Gastrocnemius medialis (tissue), 4 donors: ENCODE measurements at regions of chr11 and their contacts with region 1.

Region 1: GRCh38 chr11:14454861-14455632 is 44.6 kb downstream of the COPB1 start:
- DNase-seq: no peak
- ATAC-seq: peak; percentile 69 to 80
- H3K4me3 ChIP-seq: no peak overlapping the region
- H3K27ac ChIP-seq: no peak overlapping the region
- H3K4me1 ChIP-seq: no peaks in the 10 kb centered on the region
- H3K27me3 ChIP-seq: no peaks in the 10 kb centered on the region
- CTCF ChIP-seq: peak in 4 of 5 experiments; percentile 23 to 62 (median 49)
- POLR2A ChIP-seq: no peak

Region 2: DNA sequence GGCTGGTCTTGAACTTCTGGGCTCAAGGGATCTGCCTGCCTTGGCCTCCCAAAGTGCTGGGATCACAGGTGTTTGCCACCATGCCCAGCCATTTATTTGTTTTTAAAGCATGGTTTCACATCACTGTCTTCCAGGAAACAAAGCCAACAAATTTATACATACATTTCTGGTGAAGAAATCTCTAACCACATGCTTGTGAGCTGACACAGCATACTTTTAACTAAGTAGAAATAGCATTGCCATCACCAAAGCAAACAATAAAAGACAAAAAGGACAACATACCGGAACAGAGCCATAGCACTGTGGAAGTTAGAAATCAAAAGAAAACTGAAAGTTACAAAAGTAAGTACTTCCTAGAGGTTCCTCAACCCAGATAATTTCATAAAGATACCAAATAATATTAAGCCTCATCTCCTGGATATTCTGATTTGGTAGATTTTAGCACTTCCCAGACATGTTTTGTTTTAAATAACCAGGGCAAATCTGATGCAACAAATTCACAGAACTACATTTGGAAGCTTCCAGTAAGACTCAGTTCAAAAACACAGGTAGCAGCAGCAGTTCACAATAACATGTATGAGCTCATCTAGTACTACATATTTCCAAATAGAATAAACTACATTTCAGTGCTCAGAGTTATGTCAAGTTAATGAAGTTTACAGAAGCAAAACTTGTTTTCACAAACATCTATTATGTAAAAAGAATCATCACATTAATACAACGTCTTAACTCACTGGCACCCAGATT is 166.7 kb before region 1 on chr11:
- in situ Hi-C with region 1: loop called in 2 of 4 experiments (anchors 5 to 10 kb)
- intact Hi-C with region 1: no loop called
- DNase-seq: no peak
- ATAC-seq: no peak
- H3K4me3 ChIP-seq: no peak overlapping the region
- H3K27ac ChIP-seq: no peak overlapping the region
- H3K4me1 ChIP-seq: no peaks in the 10 kb centered on the region
- H3K27me3 ChIP-seq: no peaks in the 10 kb centered on the region
- CTCF ChIP-seq: no peak
- POLR2A ChIP-seq: no peak